Activated CD8-positive, alpha-beta T cell treated with anti-CD3 and anti-CD28 coated beads for 36 hours (primary cell): ENCODE measurements at regions of chr15 and their contacts with region 1.

Region 1: GRCh38 chr15:89177633-89178306 is 43.6 kb downstream of the RLBP1 start:
- DNase-seq: peak; percentile 78
- ATAC-seq: peak; percentile 35
- H3K4me3 Mint-ChIP-seq: no peak overlapping the region
- H3K27ac Mint-ChIP-seq: peak overlapping the region; percentile 36
- H3K4me1 Mint-ChIP-seq: peaks cover 35% of the 10 kb centered on the region
- H3K27me3 Mint-ChIP-seq: no peaks in the 10 kb centered on the region
- CTCF ChIP-seq: peak; percentile 83

Region 2: GRCh38 chr15:89075846-89076245 is 101.9 kb before region 1 on chr15:
- CTCF ChIA-PET with region 1: interaction called, 12 read pairs
- POLR2A ChIA-PET with region 1: no interaction called
- intact Hi-C with region 1: loop called (anchors 10 kb)
- DNase-seq: no peak
- ATAC-seq: no peak
- H3K4me3 Mint-ChIP-seq: no peak overlapping the region
- H3K27ac Mint-ChIP-seq: no peak overlapping the region
- H3K4me1 Mint-ChIP-seq: peaks cover 14% of the 10 kb centered on the region
- H3K27me3 Mint-ChIP-seq: no peaks in the 10 kb centered on the region
- CTCF ChIP-seq: no peak

Region 3: DNA sequence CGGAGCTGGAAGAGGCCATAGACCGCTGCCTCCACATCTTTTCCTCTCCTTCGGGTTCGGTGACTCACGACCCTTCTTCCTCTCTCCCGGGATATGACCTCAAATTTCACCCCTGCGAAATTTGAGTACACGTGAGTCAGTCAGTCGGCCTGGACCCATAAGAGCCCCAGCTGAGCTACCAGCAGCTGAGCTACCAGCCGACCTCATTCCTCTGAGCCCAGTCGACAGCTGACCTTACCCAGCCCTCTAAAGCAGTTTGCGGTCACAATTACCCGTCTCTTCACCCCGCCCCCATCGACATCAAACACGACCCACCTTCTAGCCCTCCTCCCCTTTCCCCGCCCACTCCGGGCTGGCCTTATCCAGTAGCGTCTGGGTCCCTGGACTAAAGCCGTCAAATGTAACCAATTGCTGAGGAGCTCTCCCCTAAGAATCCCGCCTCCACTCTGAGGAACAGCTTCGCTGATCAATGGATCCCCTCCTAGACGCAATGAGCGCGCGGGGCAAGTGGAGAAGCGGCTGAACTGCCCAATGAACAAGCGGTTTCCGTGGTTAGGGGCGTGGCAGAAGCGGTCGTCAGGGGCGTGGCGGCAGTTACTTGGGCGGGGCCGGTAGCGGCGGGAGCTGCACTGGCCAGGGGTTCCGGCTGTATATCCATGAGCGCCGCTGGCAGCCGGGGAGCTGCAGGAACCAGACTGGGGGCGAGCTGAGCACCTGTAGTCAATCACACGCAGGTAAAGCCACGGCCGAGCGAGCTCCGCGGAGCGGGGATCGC is 89.8 kb before region 1 on chr15 and contains the start of gene ABHD2:
- CTCF ChIA-PET with region 1: interaction called, 32 read pairs
- POLR2A ChIA-PET with region 1: interaction called, 3 read pairs
- intact Hi-C with region 1: loop called (anchors 10 kb)
- DNase-seq: peak; percentile 99
- ATAC-seq: peak; percentile 98
- H3K4me3 Mint-ChIP-seq: no peak within 1 kb of the TSS
- H3K27ac Mint-ChIP-seq: peak within 1 kb of the TSS; percentile 18
- H3K4me1 Mint-ChIP-seq: peaks cover 36% of the 10 kb centered on the region
- H3K27me3 Mint-ChIP-seq: no peaks in the 10 kb centered on the region
- CTCF ChIP-seq: no peak
- total RNA-seq, gene ABHD2: 36.8 to 38.9 TPM

Region 4: GRCh38 chr15:89101302-89102191 is 76.2 kb before region 1 on chr15:
- CTCF ChIA-PET with region 1: interaction called, 25 read pairs
- POLR2A ChIA-PET with region 1: no interaction called
- intact Hi-C with region 1: no loop called
- DNase-seq: no peak
- ATAC-seq: peak; percentile 77
- H3K4me3 Mint-ChIP-seq: no peak overlapping the region
- H3K27ac Mint-ChIP-seq: peak overlapping the region; percentile 25
- H3K4me1 Mint-ChIP-seq: peaks cover 17% of the 10 kb centered on the region
- H3K27me3 Mint-ChIP-seq: no peaks in the 10 kb centered on the region
- CTCF ChIP-seq: no peak

Region 5: DNA sequence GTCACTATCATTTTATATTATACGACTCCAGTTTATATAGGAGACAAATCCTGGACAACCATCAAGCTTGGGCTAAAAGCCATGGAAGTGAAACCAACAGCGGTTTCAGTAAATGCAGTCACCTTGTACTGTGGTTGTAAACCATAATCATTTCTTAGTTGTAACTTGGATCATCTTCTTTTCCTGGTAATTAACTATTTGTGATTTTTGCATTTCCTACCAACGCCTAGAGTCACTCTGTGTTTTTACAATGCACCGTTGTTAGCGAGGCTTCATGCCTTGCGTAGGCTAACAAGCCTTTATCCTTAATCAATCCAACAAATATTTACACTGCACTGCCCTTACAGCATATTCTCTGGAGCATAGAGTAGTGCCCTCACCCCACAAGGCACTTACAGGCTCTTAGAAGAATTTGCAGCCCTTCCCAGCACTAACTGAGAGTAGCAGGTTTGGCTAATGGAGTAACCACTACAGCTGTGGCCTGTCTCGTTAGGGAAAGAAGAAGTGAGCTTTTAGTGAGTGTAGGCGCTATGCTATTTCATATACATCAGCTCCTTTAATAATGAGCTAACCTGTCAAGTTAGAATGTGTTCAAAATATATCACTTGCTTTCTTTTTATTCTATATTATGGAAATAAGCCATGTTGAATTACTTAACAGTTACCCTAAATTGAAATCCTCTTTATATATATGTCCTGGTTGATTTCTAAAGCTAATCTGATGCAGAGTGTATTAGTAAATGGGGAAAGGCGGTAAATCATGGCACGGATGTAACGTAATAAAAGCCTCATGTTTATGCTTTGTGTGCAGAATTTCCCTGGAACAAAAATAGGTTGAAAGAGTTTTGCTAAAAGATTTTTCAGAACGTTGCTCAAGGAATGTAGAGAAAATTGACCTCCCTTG is 26.8 kb before region 1 on chr15:
- CTCF ChIA-PET with region 1: interaction called, 11 read pairs
- POLR2A ChIA-PET with region 1: no interaction called
- intact Hi-C with region 1: no loop called
- DNase-seq: no peak
- ATAC-seq: no peak
- H3K4me3 Mint-ChIP-seq: no peak overlapping the region
- H3K27ac Mint-ChIP-seq: no peak overlapping the region
- H3K4me1 Mint-ChIP-seq: peaks cover 3% of the 10 kb centered on the region
- H3K27me3 Mint-ChIP-seq: no peaks in the 10 kb centered on the region
- CTCF ChIP-seq: no peak

Region 6: GRCh38 chr15:89187976-89188514 is 10.3 kb after region 1 on chr15:
- CTCF ChIA-PET with region 1: interaction called, 19 read pairs
- POLR2A ChIA-PET with region 1: no interaction called
- intact Hi-C with region 1: no loop called
- DNase-seq: no peak
- ATAC-seq: no peak
- H3K4me3 Mint-ChIP-seq: no peak overlapping the region
- H3K27ac Mint-ChIP-seq: no peak overlapping the region
- H3K4me1 Mint-ChIP-seq: peaks cover 3% of the 10 kb centered on the region
- H3K27me3 Mint-ChIP-seq: no peaks in the 10 kb centered on the region
- CTCF ChIP-seq: no peak

Region 7: DNA sequence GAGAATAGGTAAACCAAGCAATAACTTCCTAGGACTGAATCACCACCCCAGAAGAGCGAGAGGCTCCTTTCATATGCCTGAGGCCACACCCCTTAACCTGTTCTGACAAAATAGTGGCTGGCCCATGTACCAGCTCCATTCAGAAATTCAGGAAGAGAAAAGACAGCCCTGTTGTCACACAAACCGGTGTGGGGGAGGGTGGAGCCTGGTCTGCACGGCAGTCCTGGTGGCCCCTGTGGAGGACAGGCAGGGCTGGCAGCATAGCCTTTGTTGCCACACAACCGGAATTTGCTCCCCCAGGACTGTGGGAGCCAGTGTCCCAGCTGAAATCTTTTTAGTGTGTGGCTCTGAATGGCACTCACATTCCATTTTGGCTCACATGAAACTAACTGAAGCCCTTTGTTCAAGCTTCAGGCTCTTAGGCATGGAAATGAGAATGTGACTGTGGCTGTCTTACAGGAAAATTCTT is 19.8 kb after region 1 on chr15:
- CTCF ChIA-PET with region 1: interaction called, 23 read pairs
- POLR2A ChIA-PET with region 1: no interaction called
- intact Hi-C with region 1: no loop called
- DNase-seq: peak; percentile 30
- ATAC-seq: peak; percentile 90
- H3K4me3 Mint-ChIP-seq: no peak overlapping the region
- H3K27ac Mint-ChIP-seq: peak overlapping the region; percentile 80
- H3K4me1 Mint-ChIP-seq: peaks cover 11% of the 10 kb centered on the region
- H3K27me3 Mint-ChIP-seq: no peaks in the 10 kb centered on the region
- CTCF ChIP-seq: no peak